ENCODE measurements at regions of chr4 and their contacts with region 1.

Region 1: GRCh38 chr4:84803720-84804119 is 162.8 kb downstream of the WDFY3 start:
- DNase-seq: peak; percentile 49
- H3K4me3 ChIP-seq: no peak overlapping the region
- H3K27ac ChIP-seq: peak overlapping the region; percentile 38
- H3K4me1 ChIP-seq: peaks cover 47% of the 10 kb centered on the region
- H3K27me3 ChIP-seq: no peaks in the 10 kb centered on the region
- CTCF ChIP-seq: no peak
- POLR2A ChIP-seq: no peak

Region 2: GRCh38 chr4:84814094-84814750 is 10.5 kb after region 1 on chr4:
- CTCF ChIA-PET with region 1: no interaction called
- POLR2A ChIA-PET with region 1: no interaction called
- dilution Hi-C with region 1: no loop called
- intact Hi-C with region 1: loop called (anchors 1 kb)
- DNase-seq: peak; percentile 87
- H3K4me3 ChIP-seq: no peak overlapping the region
- H3K27ac ChIP-seq: peak overlapping the region; percentile 18
- H3K4me1 ChIP-seq: peaks cover 14% of the 10 kb centered on the region
- H3K27me3 ChIP-seq: no peaks in the 10 kb centered on the region
- CTCF ChIP-seq: no peak
- POLR2A ChIP-seq: no peak

Region 3: DNA sequence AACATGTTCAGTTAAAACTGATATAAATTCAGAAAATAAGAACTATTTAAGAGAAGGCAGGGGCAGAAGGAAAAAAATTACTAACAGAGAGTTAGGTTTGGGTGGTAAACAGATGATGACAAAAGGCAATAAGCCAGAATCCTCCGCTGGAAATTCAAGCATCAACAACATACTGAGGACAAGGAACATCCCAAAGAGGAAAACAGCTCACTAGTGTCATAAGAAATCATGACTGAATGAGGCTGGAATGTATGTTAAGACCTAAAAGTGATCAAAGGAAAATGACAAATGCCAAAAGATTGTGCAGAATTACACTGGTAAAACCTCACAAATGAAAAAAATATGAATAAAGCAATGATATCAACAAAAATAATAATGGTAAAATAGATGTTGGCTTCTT is 74.4 kb after region 1 on chr4:
- CTCF ChIA-PET with region 1: no interaction called
- POLR2A ChIA-PET with region 1: interaction called, 4 read pairs
- dilution Hi-C with region 1: no loop called
- intact Hi-C with region 1: loop called (anchors 2 kb)
- DNase-seq: peak; percentile 70
- H3K4me3 ChIP-seq: no peak overlapping the region
- H3K27ac ChIP-seq: peak overlapping the region; percentile 88
- H3K4me1 ChIP-seq: peaks cover 35% of the 10 kb centered on the region
- H3K27me3 ChIP-seq: no peaks in the 10 kb centered on the region
- CTCF ChIP-seq: no peak
- POLR2A ChIP-seq: no peak